ENCODE measurements at regions of chr1 and their contacts with region 1.

Region 1: GRCh38 chr1:36385410-36386257 is at the start of gene STK40:
- DNase-seq: peak; percentile 98
- H3K4me3 ChIP-seq: peak within 1 kb of the TSS; percentile 88
- CTCF ChIP-seq: no peak

Region 2: DNA sequence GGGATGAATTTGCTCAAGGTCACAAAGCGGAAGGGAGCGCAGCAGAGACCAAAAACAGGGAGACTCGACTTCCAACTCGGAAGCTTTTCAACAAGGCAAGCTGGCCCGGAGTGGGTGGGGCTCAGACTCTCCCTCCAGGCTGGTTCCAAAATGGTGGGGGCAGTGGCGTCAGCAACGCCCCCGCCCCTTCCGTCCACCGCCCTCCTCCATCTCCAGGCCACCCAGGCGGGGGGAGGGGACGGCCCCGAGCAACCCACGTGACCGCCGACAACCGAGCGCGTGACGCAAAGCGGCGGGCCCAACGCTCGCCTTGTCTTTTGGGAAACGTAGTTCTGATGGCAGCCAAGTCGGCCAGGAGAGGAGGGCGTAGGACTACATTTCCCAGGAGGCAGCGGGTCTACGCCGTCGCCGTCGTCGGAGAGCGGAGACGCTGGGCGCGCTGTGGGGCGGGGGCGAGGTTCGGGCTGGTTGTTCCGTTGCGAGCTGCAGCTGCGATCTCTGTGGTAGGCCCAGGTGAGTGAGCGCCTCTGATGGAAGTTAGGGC is 161.6 kb before region 1 on chr1 and contains the start of gene THRAP3:
- CTCF ChIA-PET with region 1: no interaction called
- POLR2A ChIA-PET with region 1: interaction called, 10 read pairs
- DNase-seq: peak; percentile 95
- H3K4me3 ChIP-seq: peak within 1 kb of the TSS; percentile 85
- CTCF ChIP-seq: no peak

Region 3: DNA sequence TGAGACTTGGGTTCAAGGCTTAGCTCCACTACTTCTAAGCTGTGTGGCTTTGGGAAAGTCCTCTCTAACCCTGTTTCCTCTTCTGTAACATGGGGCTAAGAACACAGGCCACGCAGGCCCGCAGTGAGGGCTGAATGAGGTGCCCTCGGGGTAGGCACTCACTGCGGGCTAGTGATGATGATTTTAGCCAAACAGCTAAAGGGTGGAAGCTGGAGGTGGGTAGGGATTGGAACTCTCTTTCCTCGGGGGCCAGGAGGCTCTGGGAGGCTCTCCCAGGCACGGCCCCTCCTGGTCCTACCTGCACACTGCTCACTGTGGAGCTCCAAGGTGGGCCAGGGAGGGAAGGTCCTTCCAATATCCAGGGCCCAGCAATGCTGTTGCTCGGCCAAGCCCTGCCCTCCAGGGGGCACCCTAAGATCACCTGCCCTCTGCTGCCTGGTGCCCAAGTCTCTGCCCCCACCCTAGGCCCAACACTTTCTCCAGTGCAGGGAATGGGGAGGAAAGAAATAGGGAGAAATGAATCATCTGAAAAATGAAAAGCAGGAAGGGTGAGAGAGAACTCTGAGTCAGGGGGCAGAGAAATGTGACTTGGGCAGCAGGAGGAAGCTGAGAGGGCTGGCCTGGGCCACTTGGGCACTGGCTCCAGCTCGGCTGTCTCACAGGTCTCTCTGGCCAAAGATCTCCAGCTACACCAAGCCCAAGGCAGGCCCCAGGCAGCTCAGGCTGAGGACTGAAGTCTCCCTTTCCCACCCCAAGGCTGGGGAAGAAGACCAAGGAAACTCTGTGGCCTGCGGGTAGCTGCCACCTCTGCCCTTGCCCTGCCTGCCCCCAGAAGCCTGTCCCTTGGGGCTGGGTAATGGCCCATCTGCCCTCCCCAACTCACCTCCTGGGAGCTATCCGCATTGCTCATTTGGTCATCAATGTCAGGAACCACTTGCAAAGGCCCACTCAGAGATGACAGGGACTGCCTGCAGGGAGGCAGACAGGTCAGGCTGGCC is 42.9 kb before region 1 on chr1:
- CTCF ChIA-PET with region 1: interaction called, 29 read pairs
- POLR2A ChIA-PET with region 1: interaction called, 11 read pairs
- DNase-seq: no peak
- H3K4me3 ChIP-seq: no peak overlapping the region
- CTCF ChIP-seq: peak; percentile 84

Region 4: GRCh38 chr1:36369061-36369861 is 16.4 kb before region 1 on chr1:
- CTCF ChIA-PET with region 1: no interaction called
- POLR2A ChIA-PET with region 1: interaction called, 10 read pairs
- DNase-seq: no peak
- H3K4me3 ChIP-seq: no peak overlapping the region
- CTCF ChIP-seq: peak; percentile 92

Region 5: GRCh38 chr1:36420836-36421664 is 35.4 kb after region 1 on chr1:
- CTCF ChIA-PET with region 1: interaction called, 11 read pairs
- POLR2A ChIA-PET with region 1: interaction called, 4 read pairs
- DNase-seq: peak; percentile 26
- H3K4me3 ChIP-seq: no peak overlapping the region
- CTCF ChIP-seq: peak; percentile 99

Measured in AG04449 (cell line).